Activated B cell treated with CpG ODN at 0.5 μM for 24 hours (primary cell): ENCODE measurements at regions of chr20 and their contacts with region 1.

Region 1: GRCh38 chr20:3545401-3545925 is 74.6 kb downstream of the ATRN start:
- DNase-seq: no peak
- ATAC-seq: no peak
- H3K4me3 Mint-ChIP-seq: no peak overlapping the region
- H3K27ac Mint-ChIP-seq: no peak overlapping the region
- H3K4me1 Mint-ChIP-seq: no peaks in the 10 kb centered on the region
- H3K27me3 Mint-ChIP-seq: no peaks in the 10 kb centered on the region
- CTCF ChIP-seq: no peak

Region 2: GRCh38 chr20:4134355-4134834 is 588.9 kb after region 1 on chr20:
- CTCF ChIA-PET with region 1: no interaction called
- POLR2A ChIA-PET with region 1: interaction called, 10 read pairs
- intact Hi-C with region 1: no loop called
- DNase-seq: no peak
- ATAC-seq: no peak
- H3K4me3 Mint-ChIP-seq: no peak overlapping the region
- H3K27ac Mint-ChIP-seq: no peak overlapping the region
- H3K4me1 Mint-ChIP-seq: no peaks in the 10 kb centered on the region
- H3K27me3 Mint-ChIP-seq: peaks cover 17% of the 10 kb centered on the region
- CTCF ChIP-seq: no peak